ENCODE measurements at regions of chr10 and their contacts with region 1.

Region 1: DNA sequence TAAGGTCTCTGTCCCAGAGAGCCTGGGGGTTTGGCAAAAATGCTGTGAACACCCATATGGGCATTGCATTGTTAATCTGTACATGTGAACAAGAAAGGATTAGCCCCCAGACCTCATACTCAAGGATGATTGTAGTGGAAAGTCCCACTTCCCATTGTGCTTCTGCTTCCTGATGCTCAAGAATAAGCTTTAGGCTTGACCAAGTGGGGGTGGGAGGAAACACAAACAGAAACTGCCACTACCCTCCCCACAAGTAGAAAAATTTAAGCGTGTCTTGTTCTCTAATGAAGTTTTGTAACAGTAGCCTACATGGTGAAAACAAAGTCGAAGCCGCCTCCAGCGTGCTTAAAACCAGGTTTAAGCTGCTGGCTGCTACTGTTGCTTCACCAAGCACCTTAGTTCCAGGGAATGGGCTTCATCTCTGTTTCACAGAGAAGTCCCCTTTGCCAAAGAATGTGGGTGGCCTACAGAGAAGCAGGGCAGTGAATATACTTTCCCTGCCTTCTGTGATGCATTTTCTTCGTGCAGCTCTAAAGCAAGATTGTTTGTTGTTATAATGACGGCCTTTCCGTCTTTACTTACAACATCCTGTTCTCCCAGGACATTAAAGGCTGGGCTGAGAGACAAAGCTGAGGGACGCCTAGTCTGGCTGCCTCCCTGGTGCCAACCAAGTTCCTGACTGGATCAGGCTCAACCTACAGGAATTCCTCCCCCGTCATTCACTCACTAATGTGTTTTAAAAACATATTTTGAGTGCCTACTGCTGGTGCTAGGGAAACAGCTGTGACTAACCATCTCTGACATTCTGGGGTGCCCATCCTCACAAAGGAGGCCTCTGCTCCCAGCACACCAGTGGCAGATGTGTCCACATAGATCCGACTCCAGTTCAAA is 32.1 kb upstream of the CCSER2 start:
- DNase-seq: peak in 1 of 2 donors; percentile 83
- H3K4me3 ChIP-seq: no peak overlapping the region
- H3K27ac ChIP-seq: peak overlapping the region; percentile 67 to 72
- H3K4me1 ChIP-seq: peaks cover 0 to 28% of the 10 kb centered on the region in 2 donors
- H3K27me3 ChIP-seq: no peaks in the 10 kb centered on the region
- CTCF ChIP-seq: no peak

Region 2: GRCh38 chr10:84352251-84352842 is 56.0 kb after region 1 on chr10:
- intact Hi-C with region 1: loop called (anchors 5 kb)
- DNase-seq: peak in 1 of 2 donors; percentile 72
- H3K4me3 ChIP-seq: no peak overlapping the region
- H3K27ac ChIP-seq: no peak overlapping the region
- H3K4me1 ChIP-seq: peaks cover 4 to 14% of the 10 kb centered on the region in 2 donors
- H3K27me3 ChIP-seq: no peaks in the 10 kb centered on the region
- CTCF ChIP-seq: peak; percentile 56 to 76 (median 59)